ENCODE measurements at regions of chr3 and their contacts with region 1.

Region 1: DNA sequence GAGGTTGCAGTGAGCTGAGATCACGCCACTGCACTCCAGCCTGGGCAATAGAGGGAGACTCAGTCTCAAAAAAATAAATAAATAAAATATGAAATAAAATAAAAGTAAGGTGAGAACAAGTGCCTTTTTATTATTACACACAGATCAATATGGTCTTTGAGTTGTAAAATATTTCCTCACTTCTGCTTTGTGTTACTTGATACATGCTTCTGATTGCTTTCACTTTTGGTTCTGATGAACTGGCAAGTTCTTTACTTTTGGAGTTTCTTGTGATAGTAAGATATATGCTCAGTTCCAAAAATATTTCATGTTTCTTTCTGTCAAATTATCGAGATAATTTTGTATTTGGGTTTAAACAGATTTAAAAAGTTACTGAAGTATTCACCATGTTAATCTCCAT is 16.6 kb upstream of the GYG1 start:
- DNase-seq: no peak
- ATAC-seq: no peak

Region 2: GRCh38 chr3:149016669-149017541 is 42.2 kb after region 1 on chr3:
- intact Hi-C with region 1: loop called (anchors 5 kb)
- DNase-seq: no peak
- ATAC-seq: peak; percentile 30

Region 3: DNA sequence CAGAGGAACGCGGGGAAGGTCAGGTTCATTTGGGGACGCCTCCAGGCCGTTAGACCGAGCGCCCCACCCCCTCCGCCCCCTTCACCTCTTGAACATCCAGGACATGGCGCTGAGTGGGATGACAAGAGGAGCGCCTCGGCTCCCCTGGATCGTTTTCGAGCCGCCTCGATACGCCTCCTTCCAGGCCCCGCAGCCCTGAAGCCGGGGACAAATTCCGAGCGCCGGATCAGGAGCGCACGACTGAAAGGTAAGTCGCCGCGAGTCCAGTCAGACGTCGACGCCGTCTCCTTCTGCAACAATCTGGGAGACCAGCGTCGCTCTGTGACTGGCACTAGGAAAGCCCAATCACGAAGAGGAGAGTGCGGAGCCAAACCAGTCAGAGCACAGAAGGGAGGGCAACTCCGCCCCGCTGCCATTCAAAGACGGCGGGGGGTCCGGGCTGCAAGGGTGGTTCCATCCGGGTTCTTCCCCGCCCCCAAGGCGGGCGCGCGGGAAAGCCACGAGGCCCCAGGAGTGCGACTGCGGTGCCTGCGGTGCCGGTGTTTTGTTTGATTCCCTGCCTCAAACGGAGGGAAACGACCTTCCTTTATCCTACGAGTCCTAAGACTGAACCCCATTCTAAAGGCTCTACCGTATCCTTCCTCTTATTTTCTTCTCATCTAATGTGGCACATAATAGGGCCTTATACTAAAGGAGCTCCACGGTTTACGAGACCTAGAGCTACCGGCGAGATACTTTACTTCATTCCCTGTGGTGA is 111.7 kb after region 1 on chr3 and contains the start of gene HLTF:
- intact Hi-C with region 1: loop called (anchors 5 kb)
- DNase-seq: peak; percentile 94
- ATAC-seq: peak; percentile 100
- total RNA-seq, gene HLTF: 26.1 TPM

Region 4: DNA sequence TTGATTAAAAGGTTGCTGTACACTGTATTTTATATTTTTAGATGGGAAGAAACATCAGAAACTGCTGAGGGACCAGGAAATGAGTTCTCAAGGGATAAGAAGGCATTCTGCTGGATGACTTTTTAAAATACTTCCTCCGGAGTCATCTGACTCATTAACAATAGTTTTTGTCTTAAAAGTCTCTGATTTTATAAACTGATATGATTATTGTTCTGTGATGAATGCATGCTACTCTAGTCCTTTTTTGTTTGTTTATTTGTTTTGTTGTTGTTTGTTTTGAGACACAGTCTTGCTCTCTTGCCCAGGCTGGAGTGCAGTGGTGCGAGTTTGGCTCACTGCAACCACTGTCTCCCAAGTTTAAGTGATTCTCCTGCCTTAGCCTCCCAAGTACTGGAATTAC is 129.8 kb after region 1 on chr3:
- intact Hi-C with region 1: no loop called
- DNase-seq: no peak
- ATAC-seq: no peak